Esophagus muscularis mucosa (tissue), 4 donors: ENCODE measurements at regions of chr11 and their contacts with region 1.

Region 1: GRCh38 chr11:95089620-95090542 is at the start of gene ENDOD1:
- DNase-seq: peak; percentile 90
- H3K4me3 ChIP-seq: peak within 1 kb of the TSS; percentile 84 to 98 (median 91)
- H3K27ac ChIP-seq: peak within 1 kb of the TSS; percentile 93 to 95 (median 94)
- H3K4me1 ChIP-seq: peaks cover 14 to 45% (median 39%) of the 10 kb centered on the region in 4 donors
- H3K27me3 ChIP-seq: no peaks in the 10 kb centered on the region
- CTCF ChIP-seq: peak in 1 of 3 experiments; percentile 11
- EP300 ChIP-seq: no peak
- POLR2A ChIP-seq: no peak
- total RNA-seq, gene ENDOD1: 37.6 to 43.2 (median 41.0) TPM

Region 2: GRCh38 chr11:95067039-95067840 is 22.6 kb before region 1 on chr11:
- intact Hi-C with region 1: loop called (anchors 2 kb)
- DNase-seq: peak; percentile 95
- H3K4me3 ChIP-seq: peak overlapping the region; percentile 78 to 89 (median 84)
- H3K27ac ChIP-seq: peak overlapping the region; percentile 97 to 98 (median 98)
- H3K4me1 ChIP-seq: peaks cover 11 to 28% (median 26%) of the 10 kb centered on the region in 4 donors
- H3K27me3 ChIP-seq: peaks cover 0 to 7% (median 0%) of the 10 kb centered on the region in 4 donors
- CTCF ChIP-seq: peak; percentile 29 to 75 (median 45)
- EP300 ChIP-seq: no peak
- POLR2A ChIP-seq: no peak

Region 3: GRCh38 chr11:95138448-95138847 is 48.6 kb after region 1 on chr11:
- intact Hi-C with region 1: loop called (anchors 5 kb)
- DNase-seq: no peak
- H3K4me3 ChIP-seq: no peak overlapping the region
- H3K27ac ChIP-seq: no peak overlapping the region
- H3K4me1 ChIP-seq: peaks cover 5 to 8% (median 7%) of the 10 kb centered on the region in 4 donors
- H3K27me3 ChIP-seq: no peaks in the 10 kb centered on the region
- CTCF ChIP-seq: peak in 1 of 3 experiments; percentile 17
- EP300 ChIP-seq: no peak
- POLR2A ChIP-seq: no peak